Activated naive CD4-positive, alpha-beta T cell treated with anti-CD3 and anti-CD28 coated beads for 36 hours (primary cell): ENCODE measurements at regions of chr17 and their contacts with region 1.

Region 1: DNA sequence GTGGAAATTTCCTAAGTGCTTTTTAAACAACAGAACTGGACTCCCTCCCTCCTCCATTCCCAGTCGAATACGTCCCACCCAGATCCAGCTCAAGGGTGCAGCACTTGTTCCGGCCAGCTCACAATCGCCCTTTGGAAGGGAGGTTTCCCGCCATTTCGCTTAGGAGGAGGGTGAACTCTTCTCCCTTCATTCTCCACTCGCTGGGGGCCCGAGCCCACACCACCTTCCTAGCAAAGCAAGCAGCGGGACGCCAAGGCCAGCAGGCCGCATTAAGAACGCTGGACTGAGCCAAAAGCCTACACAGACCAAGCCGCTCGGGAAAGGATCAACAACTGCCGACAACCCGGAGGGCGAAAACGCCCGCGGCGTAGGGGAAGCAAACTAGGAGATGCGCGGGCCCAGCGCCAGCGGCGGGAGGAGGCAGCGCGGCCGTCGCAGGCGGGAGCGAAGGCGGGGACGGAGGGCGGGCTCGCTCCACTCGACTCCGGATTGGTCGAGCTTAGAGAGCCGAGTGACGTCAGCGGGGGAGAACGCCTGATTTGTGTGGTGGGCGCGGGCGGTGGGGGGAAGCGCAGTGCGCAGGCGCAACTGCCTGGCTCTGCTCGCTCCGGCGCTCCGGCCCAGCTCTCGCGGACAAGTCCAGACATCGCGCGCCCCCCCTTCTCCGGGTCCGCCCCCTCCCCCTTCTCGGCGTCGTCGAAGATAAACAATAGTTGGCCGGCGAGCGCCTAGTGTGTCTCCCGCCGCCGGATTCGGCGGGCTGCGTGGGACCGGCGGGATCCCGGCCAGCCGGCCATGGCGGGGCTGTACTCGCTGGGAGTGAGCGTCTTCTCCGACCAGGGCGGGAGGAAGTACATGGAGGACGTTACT is at the start of gene PPM1D:
- DNase-seq: peak; percentile 99
- H3K4me3 Mint-ChIP-seq: peak within 1 kb of the TSS; percentile 93
- H3K27ac Mint-ChIP-seq: peak within 1 kb of the TSS; percentile 95
- H3K4me1 Mint-ChIP-seq: peaks cover 30% of the 10 kb centered on the region
- H3K27me3 Mint-ChIP-seq: no peaks in the 10 kb centered on the region
- total RNA-seq, gene PPM1D: 11.8 to 13.1 TPM

Region 2: GRCh38 chr17:60557805-60558204 is 42.0 kb before region 1 on chr17:
- CTCF ChIA-PET with region 1: no interaction called
- intact Hi-C with region 1: no loop called
- DNase-seq: no peak
- H3K4me3 Mint-ChIP-seq: no peak overlapping the region
- H3K27ac Mint-ChIP-seq: no peak overlapping the region
- H3K4me1 Mint-ChIP-seq: no peaks in the 10 kb centered on the region
- H3K27me3 Mint-ChIP-seq: no peaks in the 10 kb centered on the region

Region 3: GRCh38 chr17:60568561-60568960 is 31.3 kb before region 1 on chr17:
- CTCF ChIA-PET with region 1: interaction called, 10 read pairs
- intact Hi-C with region 1: no loop called
- DNase-seq: no peak
- H3K4me3 Mint-ChIP-seq: no peak overlapping the region
- H3K27ac Mint-ChIP-seq: no peak overlapping the region
- H3K4me1 Mint-ChIP-seq: no peaks in the 10 kb centered on the region
- H3K27me3 Mint-ChIP-seq: no peaks in the 10 kb centered on the region

Region 4: GRCh38 chr17:60641810-60642220 is 42.0 kb after region 1 on chr17:
- CTCF ChIA-PET with region 1: interaction called, 6 read pairs
- intact Hi-C with region 1: loop called (anchors 1 kb)
- DNase-seq: peak; percentile 74
- H3K4me3 Mint-ChIP-seq: no peak overlapping the region
- H3K27ac Mint-ChIP-seq: no peak overlapping the region
- H3K4me1 Mint-ChIP-seq: peaks cover 13% of the 10 kb centered on the region
- H3K27me3 Mint-ChIP-seq: no peaks in the 10 kb centered on the region

Region 5: DNA sequence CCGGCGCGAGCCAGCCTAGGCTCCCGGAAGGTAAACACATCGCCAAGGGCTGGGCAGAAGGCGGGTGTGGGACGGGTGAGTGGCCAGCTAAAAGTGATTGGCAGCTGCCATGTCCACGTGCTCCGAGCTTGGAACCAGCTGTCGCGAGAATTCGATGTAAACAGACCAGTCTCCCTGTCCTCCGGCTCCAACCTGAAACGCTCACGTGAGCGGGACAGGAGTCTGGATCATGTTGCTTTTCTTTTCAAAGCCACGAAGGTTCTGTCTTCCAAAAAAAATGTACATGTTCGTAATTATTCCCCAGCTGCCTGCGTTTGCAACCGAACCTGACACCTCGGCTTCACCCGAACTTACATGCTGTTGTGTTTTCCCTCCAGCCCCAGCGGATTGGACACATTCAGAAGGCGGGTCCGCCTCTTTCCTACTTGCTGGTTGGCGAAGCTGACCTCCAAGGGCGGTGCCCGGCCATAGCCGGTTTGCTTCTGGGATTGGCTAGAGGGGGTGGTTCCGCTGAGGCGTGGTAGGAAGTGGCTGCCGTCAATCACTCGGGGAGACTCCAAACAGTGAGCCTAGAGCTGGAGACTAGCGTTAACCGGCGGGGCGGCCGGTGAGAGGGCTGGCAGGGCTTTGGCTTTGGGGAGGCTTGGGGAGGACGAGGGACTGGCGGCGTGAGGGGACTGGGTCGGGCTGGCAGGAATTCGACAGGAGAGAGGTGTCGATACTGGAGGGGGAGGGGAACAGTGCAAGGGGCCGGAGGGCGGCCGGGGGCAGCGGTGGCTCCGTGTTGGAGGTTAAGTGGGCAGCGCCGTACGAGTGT is 77.7 kb after region 1 on chr17 and contains the start of gene BCAS3:
- CTCF ChIA-PET with region 1: no interaction called
- intact Hi-C with region 1: loop called (anchors 1 kb)
- DNase-seq: peak; percentile 99
- H3K4me3 Mint-ChIP-seq: peak within 1 kb of the TSS; percentile 91
- H3K27ac Mint-ChIP-seq: peak within 1 kb of the TSS; percentile 79
- H3K4me1 Mint-ChIP-seq: peaks cover 11% of the 10 kb centered on the region
- H3K27me3 Mint-ChIP-seq: no peaks in the 10 kb centered on the region
- total RNA-seq, gene BCAS3: 7.2 to 7.5 TPM

Region 6: GRCh38 chr17:60840456-60840855 is 240.6 kb after region 1 on chr17:
- CTCF ChIA-PET with region 1: no interaction called
- intact Hi-C with region 1: no loop called
- DNase-seq: no peak
- H3K4me3 Mint-ChIP-seq: no peak overlapping the region
- H3K27ac Mint-ChIP-seq: no peak overlapping the region
- H3K4me1 Mint-ChIP-seq: no peaks in the 10 kb centered on the region
- H3K27me3 Mint-ChIP-seq: no peaks in the 10 kb centered on the region

Region 7: DNA sequence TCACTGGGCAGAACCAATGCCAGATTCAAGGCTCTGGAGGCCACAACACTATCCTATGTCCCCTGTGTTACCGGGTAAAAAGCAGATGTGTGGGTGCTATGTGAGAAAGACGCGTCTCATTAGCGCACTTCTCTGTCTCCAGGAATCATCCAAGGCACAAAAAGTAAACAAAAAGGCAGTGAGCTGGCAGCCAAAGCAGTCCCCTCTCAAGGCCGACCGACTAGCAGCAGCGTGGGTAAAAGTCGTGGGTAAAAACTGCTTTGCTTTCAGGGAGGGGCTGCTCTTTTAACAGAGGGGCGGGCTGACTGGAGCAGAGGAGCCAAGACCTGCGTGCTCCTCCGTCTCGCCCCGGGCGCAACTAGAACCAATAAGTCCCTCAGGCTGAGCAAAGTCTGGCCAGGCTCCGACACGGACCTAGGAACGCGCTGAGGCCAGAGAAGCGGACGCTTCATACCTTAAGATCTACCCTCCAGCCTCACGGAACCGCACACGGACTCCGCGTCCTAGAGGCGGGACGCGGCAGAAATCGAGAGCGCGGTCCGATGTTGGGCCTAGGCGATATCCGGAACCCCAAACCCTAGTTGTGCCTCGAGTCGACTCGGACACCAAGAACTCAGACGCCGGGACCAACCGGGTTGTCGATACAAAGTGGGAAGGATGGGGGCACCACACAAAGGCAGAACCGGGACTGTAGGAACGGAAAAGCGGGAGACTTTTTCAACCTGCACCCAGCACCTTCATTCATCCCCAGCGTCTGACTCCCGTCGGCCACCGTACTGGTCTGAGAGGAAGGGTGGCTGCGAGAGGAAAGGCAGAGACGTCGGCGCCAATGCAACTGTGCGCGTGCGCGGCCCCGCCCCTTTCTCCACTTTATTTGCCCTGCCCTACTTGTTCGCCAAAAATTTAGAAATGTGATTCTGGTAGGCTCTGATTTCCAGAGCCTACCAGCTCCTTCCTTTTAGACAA is 1327.6 kb after region 1 on chr17 and contains the start of gene INTS2:
- CTCF ChIA-PET with region 1: no interaction called
- intact Hi-C with region 1: loop called (anchors 2 kb)
- DNase-seq: peak; percentile 97
- H3K4me3 Mint-ChIP-seq: peak within 1 kb of the TSS; percentile 95
- H3K27ac Mint-ChIP-seq: peak within 1 kb of the TSS; percentile 89
- H3K4me1 Mint-ChIP-seq: peaks cover 17% of the 10 kb centered on the region
- H3K27me3 Mint-ChIP-seq: no peaks in the 10 kb centered on the region
- total RNA-seq, gene INTS2: 23.2 to 25.0 TPM